ENCODE measurements at regions of chr10 and their contacts with region 1.

Region 1: DNA sequence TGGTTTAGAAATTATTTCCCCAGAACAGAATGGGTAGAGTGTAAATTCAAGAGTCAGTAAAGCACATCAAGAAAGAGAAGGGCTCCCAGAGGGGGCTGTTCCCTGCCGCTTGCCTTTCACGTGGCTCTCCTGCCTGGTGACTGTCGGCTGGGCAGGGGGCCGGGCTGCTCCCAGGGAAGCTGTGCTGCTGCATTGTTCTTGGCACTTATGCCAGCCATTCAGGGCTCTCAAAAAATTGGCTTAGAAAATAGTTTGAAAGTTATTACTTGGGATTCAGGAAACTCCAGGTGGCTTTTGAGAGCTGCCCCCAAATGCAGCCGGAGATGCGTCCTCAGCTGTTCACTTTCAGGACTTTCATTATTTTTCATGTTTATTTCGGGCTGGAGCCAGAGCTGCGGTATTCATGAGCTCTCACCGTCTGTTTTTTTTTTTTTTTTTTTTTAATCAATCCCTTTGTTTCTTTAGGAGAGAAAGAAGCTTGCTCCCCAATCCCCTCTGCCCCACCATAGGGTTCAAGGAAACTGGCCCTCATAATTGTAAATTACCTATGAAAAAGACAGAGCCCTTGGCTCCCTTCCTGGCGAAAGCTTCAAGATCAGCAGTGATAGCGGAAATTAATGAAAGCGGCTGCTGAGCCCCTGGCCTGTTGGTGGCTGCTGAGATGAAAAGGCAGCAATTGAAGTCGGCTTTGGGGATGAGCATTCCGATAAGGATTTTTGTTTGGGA is 94.1 kb downstream of the SORCS3 start:
- DNase-seq: no peak
- ATAC-seq: no peak
- H3K4me3 ChIP-seq: no peak overlapping the region
- H3K27ac ChIP-seq: no peak overlapping the region
- H3K4me1 ChIP-seq: no peaks in the 10 kb centered on the region
- H3K27me3 ChIP-seq: no peaks in the 10 kb centered on the region
- CTCF ChIP-seq: no peak
- POLR2A ChIP-seq: no peak
- RAD21 ChIP-seq: no peak

Region 2: DNA sequence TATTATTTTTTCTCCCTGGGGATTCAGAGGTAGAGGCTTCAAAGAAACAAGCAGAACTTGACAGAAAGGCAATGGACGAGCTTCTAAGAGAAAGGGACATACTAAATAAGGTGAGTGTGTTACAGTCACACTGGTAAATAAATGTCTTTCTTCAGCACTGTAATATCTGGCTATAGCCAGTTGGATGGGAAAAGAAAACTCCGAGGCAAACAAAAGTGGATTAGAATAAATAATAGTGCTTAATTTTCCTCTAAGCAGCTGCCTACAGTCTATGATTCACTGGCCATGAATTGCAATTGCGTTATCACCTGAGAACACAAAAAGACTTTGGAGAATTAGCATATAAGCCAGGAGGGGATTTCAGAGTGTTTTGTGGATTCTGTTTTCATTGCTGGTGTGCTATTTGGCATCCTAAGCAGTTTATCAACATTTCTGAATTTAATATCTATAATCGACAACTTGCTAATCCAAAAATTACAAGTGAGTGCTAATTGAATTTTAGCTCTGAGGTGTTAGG is 358.4 kb before region 1 on chr10:
- CTCF ChIA-PET with region 1: no interaction called
- POLR2A ChIA-PET with region 1: no interaction called
- dilution Hi-C with region 1: no loop called
- in situ Hi-C with region 1: no loop called
- intact Hi-C with region 1: no loop called
- DNase-seq: no peak
- ATAC-seq: no peak
- H3K4me3 ChIP-seq: no peak overlapping the region
- H3K27ac ChIP-seq: no peak overlapping the region
- H3K4me1 ChIP-seq: no peaks in the 10 kb centered on the region
- H3K27me3 ChIP-seq: no peaks in the 10 kb centered on the region
- CTCF ChIP-seq: no peak
- POLR2A ChIP-seq: no peak
- RAD21 ChIP-seq: no peak

Region 3: DNA sequence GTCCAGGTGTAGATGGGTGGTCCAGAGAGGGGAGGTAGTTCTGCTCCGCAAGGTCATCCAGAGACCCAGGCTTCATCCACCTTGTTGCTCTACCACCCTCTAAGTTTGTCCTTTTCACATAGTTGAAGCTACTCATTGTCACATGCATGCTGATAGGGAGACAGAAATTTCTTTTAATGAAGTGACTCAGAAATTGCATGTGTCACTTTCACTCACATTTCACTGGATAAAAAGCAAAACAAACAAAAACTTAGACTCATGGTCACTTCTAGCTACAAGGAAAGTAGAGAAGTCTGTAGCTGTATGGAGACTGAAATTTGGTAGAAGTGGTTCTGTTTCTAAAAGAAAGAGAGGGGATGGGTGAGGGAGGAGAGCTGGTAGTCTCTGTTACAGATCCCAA is 67.7 kb after region 1 on chr10:
- CTCF ChIA-PET with region 1: no interaction called
- POLR2A ChIA-PET with region 1: no interaction called
- dilution Hi-C with region 1: no loop called
- in situ Hi-C with region 1: no loop called
- intact Hi-C with region 1: loop called (anchors 2 kb)
- DNase-seq: no peak
- ATAC-seq: no peak
- H3K4me3 ChIP-seq: no peak overlapping the region
- H3K27ac ChIP-seq: no peak overlapping the region
- H3K4me1 ChIP-seq: no peaks in the 10 kb centered on the region
- H3K27me3 ChIP-seq: no peaks in the 10 kb centered on the region
- CTCF ChIP-seq: no peak
- POLR2A ChIP-seq: no peak
- RAD21 ChIP-seq: no peak

Measured in IMR-90 (cell line).